Left colon (tissue), 2 donors: ENCODE measurements at regions of chr16 and their contacts with region 1.

Region 1: DNA sequence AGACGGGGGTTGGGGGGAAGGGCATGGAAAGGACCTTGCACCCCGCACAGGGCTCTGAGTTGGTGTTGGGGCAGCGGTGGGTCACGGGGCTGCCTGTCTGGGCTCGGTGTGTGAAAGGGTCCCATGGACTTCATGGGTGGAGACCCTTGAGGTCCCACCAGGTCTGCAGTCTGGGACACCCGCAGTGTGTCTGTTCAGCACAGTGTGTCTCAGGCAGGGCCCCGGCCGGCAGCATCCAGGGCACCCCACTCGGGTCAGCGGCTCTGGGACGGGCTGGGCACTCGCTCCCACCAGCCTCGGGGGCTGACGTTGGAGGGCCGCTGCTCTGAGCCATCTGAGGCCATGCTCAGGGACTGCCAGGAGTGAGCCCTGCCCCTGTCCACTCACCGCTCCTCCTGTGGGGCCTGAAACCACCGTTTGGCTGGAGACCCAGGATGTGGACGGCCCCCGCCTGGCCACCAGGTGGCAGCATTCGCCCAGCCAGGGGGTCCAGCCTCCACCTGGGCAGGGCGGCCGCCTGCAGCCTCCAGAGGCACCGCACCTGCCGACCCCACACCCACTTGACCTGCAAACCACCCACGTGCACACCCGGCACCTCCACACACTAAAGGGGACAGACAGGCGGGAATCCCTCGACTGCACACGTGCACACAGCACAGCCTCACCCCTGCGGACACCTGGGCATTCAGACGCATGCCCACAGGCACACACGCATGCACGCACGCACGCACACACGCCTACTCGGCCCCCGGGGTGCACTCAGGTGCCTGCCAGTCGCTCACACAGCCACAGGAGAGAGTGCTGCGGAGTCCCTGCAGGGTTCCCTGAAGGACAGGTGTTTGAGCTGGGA is 10.1 kb upstream of the ZFPM1 start:
- DNase-seq: peak; percentile 66 to 81
- ATAC-seq: peak; percentile 90

Region 2: GRCh38 chr16:88527186-88527936 is 84.4 kb after region 1 on chr16:
- intact Hi-C with region 1: loop called in 1 of 2 experiments (anchors 2 kb)
- DNase-seq: peak in 1 of 2 donors; percentile 76
- ATAC-seq: peak; percentile 68

Region 3: DNA sequence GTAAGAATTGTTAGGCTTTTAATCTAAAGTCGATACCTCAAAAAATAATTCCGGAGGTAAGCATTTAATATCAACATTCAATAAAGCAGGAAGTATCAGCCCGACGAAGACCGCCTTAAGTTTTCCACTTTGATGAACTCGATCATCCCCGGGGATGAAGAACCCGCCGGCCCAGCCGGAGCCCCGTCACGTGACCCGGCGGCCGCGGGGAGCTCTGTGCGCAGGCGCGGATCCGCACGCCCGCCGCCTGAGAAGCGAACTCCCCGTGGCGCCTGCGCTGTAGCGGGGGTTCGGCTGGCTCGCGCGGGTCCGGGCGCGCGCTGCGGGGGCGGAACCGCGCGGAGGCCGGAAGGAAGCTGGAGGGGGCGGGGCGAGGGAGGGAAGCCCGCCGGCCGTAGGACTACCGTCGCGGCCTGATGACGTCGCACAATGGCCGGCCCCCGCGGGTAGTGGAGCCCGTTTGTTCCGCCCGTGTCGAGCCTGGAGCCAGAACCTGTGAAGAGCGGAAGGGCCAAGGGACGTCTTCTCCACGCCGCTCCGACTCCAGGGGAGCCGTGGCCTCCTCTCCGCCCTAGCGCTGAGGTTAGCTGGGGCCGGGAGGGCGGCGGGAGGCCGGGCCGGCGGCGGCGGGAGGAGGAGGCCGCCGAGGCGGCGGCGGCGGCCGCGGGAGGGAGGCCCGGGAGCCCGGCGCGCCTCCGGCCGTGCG is 127.2 kb after region 1 on chr16 and contains the start of gene ZC3H18:
- intact Hi-C with region 1: loop called in 1 of 2 experiments (anchors 10 kb)
- DNase-seq: peak; percentile 92 to 99
- ATAC-seq: peak; percentile 96
- total RNA-seq, gene ZC3H18: 32.6 to 43.7 TPM